AG04450 (cell line): ENCODE measurements at regions of chr3 and their contacts with region 1.

Region 1: GRCh38 chr3:73164622-73165021 is 103.2 kb downstream of the EBLN2 start:
- DNase-seq: no peak
- H3K4me3 ChIP-seq: no peak overlapping the region
- H3K27ac ChIP-seq: no peak overlapping the region
- H3K27me3 ChIP-seq: no peaks in the 10 kb centered on the region
- CTCF ChIP-seq: no peak

Region 2: GRCh38 chr3:73148682-73149081 is 15.9 kb before region 1 on chr3:
- CTCF ChIA-PET with region 1: interaction called, 11 read pairs
- POLR2A ChIA-PET with region 1: no interaction called
- DNase-seq: no peak
- H3K4me3 ChIP-seq: no peak overlapping the region
- H3K27ac ChIP-seq: no peak overlapping the region
- H3K27me3 ChIP-seq: no peaks in the 10 kb centered on the region
- CTCF ChIP-seq: no peak